SK-N-SH (cell line): ENCODE measurements at regions of chr10 and their contacts with region 1.

Region 1: DNA sequence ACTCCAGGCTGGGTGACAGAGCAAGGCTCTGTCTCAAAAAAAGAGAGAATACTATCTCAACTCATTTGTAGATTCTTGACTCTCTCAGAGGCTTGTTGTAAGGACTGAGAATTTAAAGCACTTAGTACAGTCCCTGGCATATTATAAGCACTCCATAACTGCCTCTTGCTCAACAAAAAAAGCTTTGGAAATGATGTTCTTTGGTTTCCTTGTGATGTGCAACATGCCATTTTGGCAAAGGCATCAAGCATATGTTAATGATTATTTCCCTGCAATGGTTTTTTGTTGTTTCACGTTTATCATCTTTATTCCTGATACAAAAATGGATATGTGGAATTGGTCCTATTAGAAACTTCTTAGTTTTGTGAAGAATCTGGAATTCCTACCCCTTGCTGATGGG is 15.7 kb downstream of the NOLC1 start:
- DNase-seq: no peak
- H3K4me3 ChIP-seq: no peak overlapping the region
- H3K27ac ChIP-seq: no peak overlapping the region
- H3K4me1 ChIP-seq: no peaks in the 10 kb centered on the region
- H3K27me3 ChIP-seq: no peaks in the 10 kb centered on the region
- CTCF ChIP-seq: no peak
- EP300 ChIP-seq: no peak
- RAD21 ChIP-seq: no peak

Region 2: GRCh38 chr10:102151774-102152544 is 15.9 kb before region 1 on chr10 and contains the start of gene NOLC1:
- CTCF ChIA-PET with region 1: interaction called, 45 read pairs
- POLR2A ChIA-PET with region 1: interaction called, 4 read pairs
- DNase-seq: peak; percentile 95
- H3K4me3 ChIP-seq: peak within 1 kb of the TSS; percentile 81 to 91
- H3K27ac ChIP-seq: peak within 1 kb of the TSS; percentile 81 to 91
- H3K4me1 ChIP-seq: peaks cover 7 to 15% of the 10 kb centered on the region in 2 experiments; a peak in 2 of 4 replicates
- H3K27me3 ChIP-seq: no peaks in the 10 kb centered on the region
- CTCF ChIP-seq: no peak
- EP300 ChIP-seq: 0 out of 4 replicates have a peak, but pooled peaks of 1 of the 2 experiments have one; percentile 15
- RAD21 ChIP-seq: no peak
- polyA plus RNA-seq, gene NOLC1: 71.8 and 94.6 TPM in 2 replicates

Region 3: GRCh38 chr10:102208311-102209035 is 40.6 kb after region 1 on chr10:
- CTCF ChIA-PET with region 1: interaction called, 28 read pairs
- POLR2A ChIA-PET with region 1: no interaction called
- DNase-seq: peak; percentile 87
- H3K4me3 ChIP-seq: no peak overlapping the region
- H3K27ac ChIP-seq: peak overlapping the region; percentile 44 to 79; a peak in 3 of 4 replicates
- H3K4me1 ChIP-seq: peaks cover 9 to 14% of the 10 kb centered on the region in 2 experiments; a peak in 3 of 4 replicates
- H3K27me3 ChIP-seq: no peaks in the 10 kb centered on the region
- CTCF ChIP-seq: no peak
- EP300 ChIP-seq: peak in 1 of 2 experiments; percentile 65; a peak in 2 of 4 replicates
- RAD21 ChIP-seq: peak; percentile 26

Region 4: GRCh38 chr10:102342958-102343357 is 175.1 kb after region 1 on chr10:
- CTCF ChIA-PET with region 1: interaction called, 205 read pairs
- POLR2A ChIA-PET with region 1: no interaction called
- DNase-seq: no peak
- H3K4me3 ChIP-seq: no peak overlapping the region
- H3K27ac ChIP-seq: peak overlapping the region in 1 of 2 experiments; percentile 73; a peak in 2 of 4 replicates
- H3K4me1 ChIP-seq: peaks cover 0 to 20% of the 10 kb centered on the region in 2 experiments; a peak in 2 of 4 replicates
- H3K27me3 ChIP-seq: no peaks in the 10 kb centered on the region
- CTCF ChIP-seq: no peak
- EP300 ChIP-seq: 0 out of 4 replicates have a peak, but pooled peaks of 1 of the 2 experiments have one; percentile 12
- RAD21 ChIP-seq: no peak

Region 5: GRCh38 chr10:102394079-102394800 is 226.4 kb after region 1 on chr10:
- CTCF ChIA-PET with region 1: interaction called, 40 read pairs
- POLR2A ChIA-PET with region 1: no interaction called
- DNase-seq: peak; percentile 92
- H3K4me3 ChIP-seq: peak overlapping the region; percentile 65 to 77
- H3K27ac ChIP-seq: peak overlapping the region; percentile 47 to 81; a peak in 3 of 4 replicates
- H3K4me1 ChIP-seq: peaks cover 0 to 17% of the 10 kb centered on the region in 2 experiments; a peak in 1 of 4 replicates
- H3K27me3 ChIP-seq: no peaks in the 10 kb centered on the region
- CTCF ChIP-seq: no peak; the same call in 1 of the 2 replicates
- EP300 ChIP-seq: no peak
- RAD21 ChIP-seq: no peak